ENCODE measurements at regions of chr12 and their contacts with region 1.

Region 1: DNA sequence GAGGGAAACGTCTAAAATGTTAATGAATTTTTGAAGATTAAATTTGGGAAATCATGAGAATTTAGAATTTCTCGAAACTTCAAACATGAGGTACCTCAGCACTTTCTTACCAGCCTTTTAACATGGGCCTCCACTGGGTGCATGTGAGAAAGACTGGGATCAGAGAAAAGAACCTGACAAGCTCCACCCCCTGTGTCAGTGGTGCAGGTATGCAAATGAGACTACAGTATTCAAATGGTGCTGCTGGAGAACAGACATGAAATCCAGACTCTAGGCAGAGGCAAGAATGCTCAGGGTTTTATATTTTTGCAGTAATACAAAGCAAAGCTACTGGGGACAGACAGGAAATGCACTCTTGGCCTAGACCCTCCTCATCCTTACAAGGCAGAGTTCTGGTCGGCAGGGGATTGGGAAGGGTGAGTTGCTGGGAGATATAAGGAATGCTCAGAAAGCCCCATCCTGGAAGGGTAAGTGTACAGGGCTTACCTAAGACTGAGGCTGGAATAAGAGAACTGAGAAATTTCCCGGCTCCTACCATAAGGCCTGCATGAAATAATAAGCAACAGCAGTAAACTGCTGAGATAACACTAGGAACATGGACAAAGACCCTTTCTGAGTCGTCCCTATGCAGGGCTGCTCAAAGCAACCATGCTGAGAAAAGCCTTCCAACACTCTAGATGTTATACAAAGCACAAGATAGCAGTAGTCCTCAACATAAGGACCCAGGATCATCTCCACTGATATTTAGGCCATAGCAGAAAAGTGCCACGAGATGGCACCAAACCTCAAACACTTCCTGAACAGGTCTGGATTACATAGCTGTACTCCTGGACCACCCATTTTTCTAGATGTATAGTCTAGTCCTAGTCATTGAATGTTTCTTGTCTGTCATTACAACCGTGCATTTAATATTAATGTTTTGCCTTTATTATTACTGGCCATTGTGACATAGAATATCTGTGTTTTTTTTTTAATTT is 260.8 kb downstream of the RASSF9 start:
- DNase-seq: peak; percentile 54
- ATAC-seq: peak; percentile 99
- H3K4me3 ChIP-seq: no peak overlapping the region
- H3K27ac ChIP-seq: no peak overlapping the region
- H3K4me1 ChIP-seq: no peaks in the 10 kb centered on the region
- H3K27me3 ChIP-seq: no peaks in the 10 kb centered on the region
- CTCF ChIP-seq: peak; percentile 68 to 83 (median 70); a peak in 5 of 6 replicates
- POLR2A ChIP-seq: no peak
- RAD21 ChIP-seq: peak; percentile 83

Region 2: DNA sequence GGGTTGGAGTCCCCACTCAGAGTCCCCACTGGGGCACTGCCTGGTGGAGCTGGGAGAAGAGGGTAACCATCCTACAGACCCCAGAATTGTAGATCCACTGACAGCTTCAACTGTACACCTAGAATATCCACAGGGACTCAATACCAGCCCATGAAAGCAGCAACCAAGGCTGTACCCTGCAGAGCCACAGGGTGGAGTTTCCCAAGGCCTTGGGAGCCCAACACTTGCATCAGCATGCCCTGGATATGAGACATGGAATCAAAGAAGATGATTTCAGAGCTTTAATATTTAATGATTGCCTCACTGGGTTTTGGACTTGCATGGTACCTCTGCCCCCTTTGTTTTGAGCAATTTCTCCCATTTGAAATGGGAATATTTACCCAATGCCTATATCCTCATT is 180.4 kb after region 1 on chr12:
- CTCF ChIA-PET with region 1: no interaction called
- POLR2A ChIA-PET with region 1: no interaction called
- RAD21 ChIA-PET with region 1: no interaction called
- intact Hi-C with region 1: no loop called
- DNase-seq: no peak
- ATAC-seq: peak; percentile 54; the same call in 1 of the 2 replicates
- H3K4me3 ChIP-seq: no peak overlapping the region
- H3K27ac ChIP-seq: no peak overlapping the region
- H3K4me1 ChIP-seq: no peaks in the 10 kb centered on the region
- H3K27me3 ChIP-seq: no peaks in the 10 kb centered on the region
- CTCF ChIP-seq: no peak
- POLR2A ChIP-seq: no peak
- RAD21 ChIP-seq: no peak

Region 3: DNA sequence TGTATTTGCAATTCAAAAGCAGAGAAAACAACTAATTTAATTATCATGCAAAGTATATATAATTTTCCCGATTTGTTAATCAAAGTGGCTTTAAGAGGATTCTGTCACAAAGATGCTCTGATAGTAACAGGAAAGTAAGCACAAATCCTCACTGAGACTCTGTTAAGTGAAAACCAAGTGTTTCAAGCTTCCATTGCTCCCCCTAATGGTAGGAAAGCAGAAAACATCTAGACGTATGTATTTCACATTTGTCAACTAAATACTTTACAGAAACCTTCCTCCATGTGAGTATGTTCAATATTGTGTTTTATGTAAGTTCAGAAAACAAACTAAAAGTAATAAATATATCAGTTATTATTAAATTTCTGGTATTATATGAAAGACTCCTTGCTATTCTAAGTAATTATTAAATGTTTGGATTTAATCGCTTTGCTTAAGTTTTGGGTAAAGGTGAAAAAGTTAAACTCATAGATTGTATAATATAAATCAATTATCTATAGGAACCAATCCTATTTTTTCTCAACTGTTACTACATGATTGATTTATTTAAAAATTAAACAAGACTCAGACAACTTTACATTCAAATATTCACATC is 297.2 kb after region 1 on chr12:
- CTCF ChIA-PET with region 1: interaction called, 70 read pairs
- POLR2A ChIA-PET with region 1: no interaction called
- RAD21 ChIA-PET with region 1: interaction called, 6 to 8 read pairs
- intact Hi-C with region 1: loop called (anchors 1 kb)
- DNase-seq: peak; percentile 50
- ATAC-seq: peak; percentile 63
- H3K4me3 ChIP-seq: no peak overlapping the region
- H3K27ac ChIP-seq: no peak overlapping the region
- H3K4me1 ChIP-seq: no peaks in the 10 kb centered on the region
- H3K27me3 ChIP-seq: no peaks in the 10 kb centered on the region
- CTCF ChIP-seq: peak; percentile 54 to 73 (median 71); a peak in 5 of 6 replicates
- POLR2A ChIP-seq: no peak
- RAD21 ChIP-seq: peak; percentile 64